GM12878 (cell line): ENCODE measurements at regions of chr6 and their contacts with region 1.

Region 1: DNA sequence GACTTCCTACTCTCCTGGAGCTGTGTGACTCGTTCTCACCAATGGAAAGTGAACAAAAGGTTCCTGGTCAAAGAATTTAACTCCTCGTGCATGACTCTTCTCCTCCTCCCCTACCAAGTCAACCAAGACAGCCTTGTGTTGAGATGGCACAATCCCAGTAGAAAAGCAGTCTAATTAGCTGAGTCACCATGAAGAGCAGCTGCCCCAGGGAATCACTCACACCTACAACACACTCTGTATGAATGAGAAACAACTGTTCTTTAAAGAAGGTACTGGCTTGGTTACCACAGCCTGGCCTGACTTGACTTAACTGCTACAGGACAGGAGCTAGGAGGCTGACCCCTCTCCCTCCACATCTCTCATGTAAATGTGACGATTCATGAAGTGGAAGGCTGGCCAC is 2.9 kb upstream of the HLA-DOB start:
- DNase-seq: no peak
- ATAC-seq: no peak
- H3K4me3 ChIP-seq: no peak overlapping the region
- H3K27ac ChIP-seq: no peak overlapping the region
- H3K4me1 ChIP-seq: peaks cover 23% of the 10 kb centered on the region
- H3K27me3 ChIP-seq: no peaks in the 10 kb centered on the region
- CTCF ChIP-seq: no peak
- EP300 ChIP-seq: no peak
- POLR2A ChIP-seq: no peak
- RAD21 ChIP-seq: no peak

Region 2: GRCh38 chr6:32803416-32803815 is 16.3 kb before region 1 on chr6:
- CTCF ChIA-PET with region 1: interaction called, 3 read pairs
- POLR2A ChIA-PET with region 1: interaction called, 3 read pairs
- RAD21 ChIA-PET with region 1: no interaction called
- SMC1A ChIA-PET with region 1: interaction called, 14 read pairs
- in situ Hi-C with region 1: no loop called
- intact Hi-C with region 1: no loop called
- DNase-seq: no peak
- ATAC-seq: no peak
- H3K4me3 ChIP-seq: no peak overlapping the region
- H3K27ac ChIP-seq: no peak overlapping the region
- H3K4me1 ChIP-seq: peaks cover 4% of the 10 kb centered on the region
- H3K27me3 ChIP-seq: no peaks in the 10 kb centered on the region
- CTCF ChIP-seq: no peak
- EP300 ChIP-seq: no peak
- POLR2A ChIP-seq: no peak
- RAD21 ChIP-seq: no peak

Region 3: GRCh38 chr6:32843979-32844838 is 24.5 kb after region 1 on chr6 and contains the start of gene PSMB8:
- CTCF ChIA-PET with region 1: interaction called, 20 read pairs
- POLR2A ChIA-PET with region 1: interaction called, 10 read pairs
- RAD21 ChIA-PET with region 1: interaction called, 12 read pairs
- SMC1A ChIA-PET with region 1: interaction called, 12 read pairs
- in situ Hi-C with region 1: no loop called
- intact Hi-C with region 1: no loop called
- DNase-seq: peak; percentile 98
- ATAC-seq: peak; percentile 75
- H3K4me3 ChIP-seq: peak within 1 kb of the TSS; percentile 96
- H3K27ac ChIP-seq: peak within 1 kb of the TSS; percentile 96
- H3K4me1 ChIP-seq: peaks cover 67% of the 10 kb centered on the region
- H3K27me3 ChIP-seq: no peaks in the 10 kb centered on the region
- CTCF ChIP-seq: no peak
- EP300 ChIP-seq: peak in 1 of 2 experiments; percentile 57; a peak in 1 of 4 replicates
- POLR2A ChIP-seq: peak; percentile 81
- RAD21 ChIP-seq: no peak
- polyA plus RNA-seq, gene PSMB8: 353 to 557 TPM